PC-9 (cell line): ENCODE measurements at regions of chr16 and their contacts with region 1.

Region 1: DNA sequence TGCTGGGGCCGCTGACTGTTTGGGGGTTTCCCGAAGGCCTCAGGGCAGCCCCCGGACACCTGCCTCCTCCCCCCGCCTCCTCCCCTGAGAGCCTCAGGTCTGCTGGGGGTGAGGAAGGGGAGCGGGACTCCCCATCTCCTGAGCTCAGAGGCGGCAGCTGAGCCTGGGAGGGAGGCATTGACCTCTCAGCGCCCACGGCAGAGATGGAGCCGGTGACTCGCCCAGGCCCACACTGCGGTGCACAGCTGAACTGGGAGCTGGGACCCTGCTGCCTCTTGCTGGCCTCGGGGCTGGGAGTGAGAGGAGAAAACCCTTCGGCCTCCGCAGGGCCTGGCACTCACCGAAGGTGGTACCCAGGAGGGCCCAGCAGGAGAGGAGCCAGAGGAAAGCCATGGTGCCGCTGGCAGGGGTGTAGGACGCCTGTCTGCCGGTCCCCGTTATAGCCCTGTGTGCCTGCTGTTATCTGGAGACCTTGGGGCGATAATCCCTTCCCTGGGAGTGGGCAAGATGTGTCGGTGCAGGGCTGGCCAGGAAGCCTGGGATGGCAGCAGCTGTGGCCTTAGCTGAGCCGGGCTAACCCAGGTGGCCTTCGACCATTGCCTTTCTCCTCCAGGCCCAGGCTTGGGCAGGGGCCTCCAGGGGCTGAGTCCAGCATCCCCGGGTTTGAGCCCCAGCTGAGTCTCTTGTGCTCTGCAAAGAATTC is at the start of gene CTRB2:
- DNase-seq: no peak
- H3K4me3 ChIP-seq: no peak within 1 kb of the TSS
- H3K27ac ChIP-seq: no peak within 1 kb of the TSS
- H3K4me1 ChIP-seq: no peaks in the 10 kb centered on the region
- H3K27me3 ChIP-seq: no peaks in the 10 kb centered on the region
- CTCF ChIP-seq: no peak
- total RNA-seq, gene CTRB2: not detected in 2 replicates

Region 2: DNA sequence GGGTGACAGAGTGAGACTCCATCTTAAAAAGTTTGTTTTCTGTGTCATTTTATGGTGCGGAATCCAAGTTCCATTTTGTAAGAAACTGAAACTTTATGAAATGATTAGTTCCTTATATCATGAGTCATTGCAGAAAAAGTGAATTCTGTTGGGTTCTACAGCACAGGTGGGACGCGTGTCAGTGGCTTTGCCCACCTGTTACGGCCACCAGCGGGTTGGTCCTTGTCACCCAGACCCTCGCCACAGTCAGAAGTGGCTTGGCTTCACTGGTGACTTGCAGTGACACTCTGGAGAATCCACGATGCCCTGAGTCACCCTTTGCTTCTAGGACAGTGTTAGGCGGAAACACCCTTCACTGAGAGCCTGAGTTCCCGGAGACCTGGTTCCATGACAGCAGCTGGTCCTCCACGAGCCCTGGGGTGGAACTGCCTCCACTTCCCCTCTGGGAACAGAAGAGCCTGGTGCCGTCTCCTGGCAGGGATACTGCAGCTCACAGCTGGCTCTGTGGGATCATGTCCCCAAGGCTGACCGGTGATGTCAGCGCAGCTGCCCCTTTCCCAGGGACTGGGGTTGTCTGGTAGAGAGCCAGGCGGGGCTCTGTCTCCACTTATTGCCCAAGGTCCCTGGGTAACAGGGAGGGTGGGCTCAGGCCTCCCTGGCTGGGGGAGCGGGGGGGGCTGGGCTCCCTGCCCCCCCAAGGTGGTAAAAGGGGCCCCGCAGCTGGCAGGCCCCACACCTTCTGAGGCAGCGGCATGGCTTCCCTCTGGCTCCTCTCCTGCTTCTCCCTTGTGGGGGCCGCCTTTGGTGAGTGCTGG is 11.6 kb after region 1 on chr16 and contains the start of gene CTRB1:
- CTCF ChIA-PET with region 1: no interaction called
- POLR2A ChIA-PET with region 1: no interaction called
- intact Hi-C with region 1: loop called (anchors 2 kb)
- DNase-seq: no peak
- H3K4me3 ChIP-seq: no peak within 1 kb of the TSS
- H3K27ac ChIP-seq: no peak within 1 kb of the TSS
- H3K4me1 ChIP-seq: no peaks in the 10 kb centered on the region
- H3K27me3 ChIP-seq: no peaks in the 10 kb centered on the region
- CTCF ChIP-seq: no peak
- total RNA-seq, gene CTRB1: not detected in 2 replicates

Region 3: DNA sequence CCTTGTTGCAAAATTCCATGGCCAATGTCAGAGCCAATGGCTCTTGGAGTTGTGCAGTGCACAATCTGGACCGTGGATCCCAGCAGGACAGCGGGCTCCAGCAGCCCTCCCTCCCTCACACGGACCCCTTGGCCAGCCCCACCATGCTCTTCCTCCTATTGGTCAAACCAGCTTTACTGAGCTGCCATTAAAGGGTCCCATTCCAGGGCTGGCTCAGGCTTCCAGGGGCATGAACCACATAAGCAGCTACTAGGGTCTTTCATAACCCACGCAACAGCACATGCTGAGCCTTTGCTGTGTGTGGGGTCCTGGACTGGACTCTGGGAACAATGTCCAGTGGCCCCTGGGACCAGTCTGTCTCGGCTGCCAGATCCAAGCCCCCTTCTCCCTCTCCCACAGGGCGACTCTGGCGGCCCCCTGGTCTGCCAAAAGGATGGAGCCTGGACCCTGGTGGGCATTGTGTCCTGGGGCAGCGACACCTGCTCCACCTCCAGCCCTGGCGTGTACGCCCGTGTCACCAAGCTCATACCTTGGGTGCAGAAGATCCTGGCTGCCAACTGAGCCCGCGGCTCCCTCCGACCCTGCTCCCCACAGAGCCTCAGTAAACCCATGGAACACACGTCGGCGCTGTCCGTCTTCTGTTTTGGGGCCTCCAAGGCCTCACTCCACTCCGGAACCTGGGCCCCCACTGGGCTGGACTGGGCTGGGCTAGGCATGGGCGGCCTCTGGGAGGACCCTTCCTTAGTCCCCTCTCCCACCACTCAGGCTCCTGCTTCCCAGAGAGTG is 17.6 kb after region 1 on chr16:
- CTCF ChIA-PET with region 1: no interaction called
- POLR2A ChIA-PET with region 1: no interaction called
- intact Hi-C with region 1: loop called (anchors 2 kb)
- DNase-seq: peak in 1 of 2 experiments; percentile 25
- H3K4me3 ChIP-seq: no peak overlapping the region
- H3K27ac ChIP-seq: no peak overlapping the region
- H3K4me1 ChIP-seq: no peaks in the 10 kb centered on the region
- H3K27me3 ChIP-seq: no peaks in the 10 kb centered on the region
- CTCF ChIP-seq: no peak

Region 4: GRCh38 chr16:75288596-75289120 is 81.8 kb after region 1 on chr16:
- CTCF ChIA-PET with region 1: no interaction called
- POLR2A ChIA-PET with region 1: no interaction called
- intact Hi-C with region 1: no loop called
- DNase-seq: no peak
- H3K4me3 ChIP-seq: no peak overlapping the region
- H3K27ac ChIP-seq: no peak overlapping the region
- H3K4me1 ChIP-seq: peaks cover 13% of the 10 kb centered on the region; the same call in 1 of the 2 replicates
- H3K27me3 ChIP-seq: no peaks in the 10 kb centered on the region
- CTCF ChIP-seq: no peak

Region 5: DNA sequence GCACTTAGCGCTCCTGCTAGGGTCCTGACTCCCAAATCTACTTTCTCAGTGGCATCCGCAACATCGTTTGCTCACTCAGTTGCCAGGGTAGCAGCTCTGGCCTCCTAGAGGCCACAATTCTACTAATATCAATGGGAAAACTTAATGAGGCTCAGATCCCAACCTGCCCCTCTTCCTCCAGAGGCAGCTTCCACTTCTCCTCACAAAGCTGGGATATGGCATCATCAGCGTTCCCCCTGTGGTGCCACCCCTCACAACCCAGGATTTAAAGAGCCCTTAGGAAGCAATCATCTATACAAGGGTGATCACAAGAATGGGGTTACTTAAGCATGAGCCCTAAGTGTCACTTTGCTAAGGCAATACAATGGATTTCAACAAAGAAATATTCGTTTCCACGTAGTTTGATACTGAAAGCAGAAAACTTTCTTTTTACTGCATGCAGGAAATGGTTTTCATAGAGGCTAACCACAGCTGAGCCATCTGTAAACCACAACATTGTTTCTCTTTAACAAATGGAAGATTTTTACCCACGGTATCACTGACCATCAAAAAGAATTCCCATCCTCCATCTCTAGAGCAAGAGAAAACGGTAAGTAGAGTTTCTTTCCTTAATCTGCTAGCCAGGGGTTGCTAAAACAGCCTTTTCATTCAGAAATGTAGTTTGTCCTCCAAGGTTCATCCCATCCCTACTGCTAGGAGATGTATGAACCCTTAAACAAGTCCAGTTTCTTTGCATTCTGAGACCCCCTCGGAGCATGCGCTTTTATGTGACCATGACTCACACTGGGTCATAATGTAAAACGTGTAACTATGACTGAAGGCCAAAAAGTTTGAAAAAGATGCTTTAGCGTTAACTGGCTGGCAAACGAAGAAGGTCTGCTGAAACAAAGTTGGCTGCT is 112.9 kb after region 1 on chr16:
- CTCF ChIA-PET with region 1: no interaction called
- POLR2A ChIA-PET with region 1: no interaction called
- intact Hi-C with region 1: no loop called
- DNase-seq: no peak
- H3K4me3 ChIP-seq: no peak overlapping the region
- H3K27ac ChIP-seq: no peak overlapping the region
- H3K4me1 ChIP-seq: peaks cover 26% of the 10 kb centered on the region
- H3K27me3 ChIP-seq: no peaks in the 10 kb centered on the region
- CTCF ChIP-seq: no peak

Region 6: DNA sequence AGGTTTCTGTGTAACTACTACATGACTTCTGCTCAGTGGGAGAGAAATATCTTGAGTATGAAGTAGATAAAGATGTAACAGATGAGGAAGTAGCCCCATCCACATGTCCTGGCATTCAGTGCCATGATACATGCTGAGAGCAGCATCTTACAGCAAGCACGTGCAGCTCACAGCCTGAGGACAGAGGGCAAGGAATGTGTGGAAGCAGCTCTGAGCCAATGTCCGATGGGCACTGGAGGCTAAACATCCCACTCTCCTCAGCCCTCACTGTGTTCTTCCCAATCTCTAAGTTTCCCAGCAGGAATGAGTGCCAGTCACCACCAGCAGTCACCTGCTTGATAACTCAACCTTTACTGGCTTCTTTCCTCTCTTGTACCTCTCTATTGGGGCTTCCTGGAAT is 186.0 kb after region 1 on chr16:
- CTCF ChIA-PET with region 1: no interaction called
- POLR2A ChIA-PET with region 1: interaction called, 34 read pairs
- intact Hi-C with region 1: no loop called
- DNase-seq: no peak
- H3K4me3 ChIP-seq: no peak overlapping the region
- H3K27ac ChIP-seq: no peak overlapping the region
- H3K4me1 ChIP-seq: no peaks in the 10 kb centered on the region
- H3K27me3 ChIP-seq: no peaks in the 10 kb centered on the region
- CTCF ChIP-seq: no peak